Transverse colon (tissue), 4 donors: ENCODE measurements at regions of chr7 and their contacts with region 1.

Region 1: GRCh38 chr7:121294448-121294992 is 34.3 kb upstream of the WNT16 start:
- DNase-seq: no peak
- H3K4me3 ChIP-seq: no peak overlapping the region
- H3K27ac ChIP-seq: no peak overlapping the region
- H3K4me1 ChIP-seq: peaks cover 0 to 8% (median 0%) of the 10 kb centered on the region in 4 donors
- H3K27me3 ChIP-seq: no peaks in the 10 kb centered on the region
- CTCF ChIP-seq: no peak
- EP300 ChIP-seq: no peak
- POLR2A ChIP-seq: no peak

Region 2: DNA sequence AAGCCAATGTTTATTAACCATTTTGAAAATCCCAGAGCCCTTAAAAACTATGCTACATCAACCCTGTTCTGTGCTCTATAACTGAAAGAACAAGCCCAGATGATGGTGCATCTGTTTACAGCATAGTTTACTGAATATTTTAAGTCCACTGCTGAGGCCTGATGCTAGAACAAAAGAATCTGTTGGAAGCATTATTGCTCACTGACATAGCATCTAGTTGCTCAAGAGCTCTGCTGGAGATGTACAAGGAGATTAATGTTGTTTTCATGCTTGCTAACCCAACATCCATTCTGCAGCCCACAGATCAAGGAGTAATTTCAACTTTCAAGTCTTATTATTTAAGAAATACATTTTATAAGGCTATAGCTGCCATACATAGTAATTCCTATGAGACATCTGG is 1191.3 kb after region 1 on chr7:
- in situ Hi-C with region 1: no loop called
- intact Hi-C with region 1: loop called (anchors 5 kb)
- DNase-seq: no peak
- H3K4me3 ChIP-seq: no peak overlapping the region
- H3K27ac ChIP-seq: no peak overlapping the region
- H3K4me1 ChIP-seq: no peaks in the 10 kb centered on the region
- H3K27me3 ChIP-seq: no peaks in the 10 kb centered on the region
- CTCF ChIP-seq: no peak
- EP300 ChIP-seq: no peak
- POLR2A ChIP-seq: no peak